Transverse colon (tissue), 4 donors: ENCODE measurements at regions of chr12 and their contacts with region 1.

Region 1: DNA sequence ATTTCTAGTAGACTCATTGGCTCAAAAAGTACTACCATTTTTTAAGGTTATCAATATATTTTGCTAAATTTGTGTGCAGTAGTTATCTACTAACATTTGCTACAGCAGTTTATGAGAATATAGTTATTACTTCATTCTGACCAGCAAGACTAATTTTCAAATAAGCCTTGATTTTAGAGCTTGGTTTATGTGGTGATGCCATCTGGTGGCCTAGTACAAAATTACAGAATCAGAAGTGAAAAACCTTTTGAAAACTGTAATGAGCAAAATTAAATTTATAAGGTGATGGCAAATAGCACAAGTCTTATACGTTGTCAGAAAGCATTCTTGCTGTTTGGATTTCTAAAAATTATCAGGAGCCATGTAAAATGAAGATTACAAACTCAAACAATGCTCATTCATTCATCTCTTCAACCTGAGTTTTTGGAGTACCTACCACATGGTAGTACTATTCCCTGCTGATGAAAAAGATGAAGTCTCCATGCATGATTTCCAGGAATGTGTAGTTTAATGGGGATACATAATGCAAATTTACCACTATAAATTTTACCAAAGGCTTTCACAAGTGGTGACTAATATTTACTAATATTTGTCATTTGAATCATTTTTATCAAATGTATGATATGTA is 51.0 kb downstream of the MAGOHB start:
- DNase-seq: no peak
- H3K4me3 ChIP-seq: no peak overlapping the region
- H3K27ac ChIP-seq: no peak overlapping the region
- H3K4me1 ChIP-seq: no peaks in the 10 kb centered on the region
- H3K27me3 ChIP-seq: no peaks in the 10 kb centered on the region
- CTCF ChIP-seq: peak; percentile 68 to 86 (median 73)
- EP300 ChIP-seq: no peak
- POLR2A ChIP-seq: no peak

Region 2: GRCh38 chr12:9349888-9350885 is 1212.2 kb before region 1 on chr12:
- in situ Hi-C with region 1: no loop called
- intact Hi-C with region 1: no loop called
- DNase-seq: no peak
- H3K4me3 ChIP-seq: no peak overlapping the region
- H3K27ac ChIP-seq: no peak overlapping the region
- H3K4me1 ChIP-seq: no peaks in the 10 kb centered on the region
- H3K27me3 ChIP-seq: no peaks in the 10 kb centered on the region
- CTCF ChIP-seq: no peak
- EP300 ChIP-seq: no peak
- POLR2A ChIP-seq: no peak

Region 3: GRCh38 chr12:10235761-10236631 is 326.4 kb before region 1 on chr12:
- in situ Hi-C with region 1: loop called (anchors 5 to 25 kb)
- intact Hi-C with region 1: loop called (anchors 5 kb)
- DNase-seq: no peak
- H3K4me3 ChIP-seq: no peak overlapping the region
- H3K27ac ChIP-seq: no peak overlapping the region
- H3K4me1 ChIP-seq: no peaks in the 10 kb centered on the region
- H3K27me3 ChIP-seq: no peaks in the 10 kb centered on the region
- CTCF ChIP-seq: peak; percentile 80 to 86 (median 85)
- EP300 ChIP-seq: no peak
- POLR2A ChIP-seq: no peak

Region 4: DNA sequence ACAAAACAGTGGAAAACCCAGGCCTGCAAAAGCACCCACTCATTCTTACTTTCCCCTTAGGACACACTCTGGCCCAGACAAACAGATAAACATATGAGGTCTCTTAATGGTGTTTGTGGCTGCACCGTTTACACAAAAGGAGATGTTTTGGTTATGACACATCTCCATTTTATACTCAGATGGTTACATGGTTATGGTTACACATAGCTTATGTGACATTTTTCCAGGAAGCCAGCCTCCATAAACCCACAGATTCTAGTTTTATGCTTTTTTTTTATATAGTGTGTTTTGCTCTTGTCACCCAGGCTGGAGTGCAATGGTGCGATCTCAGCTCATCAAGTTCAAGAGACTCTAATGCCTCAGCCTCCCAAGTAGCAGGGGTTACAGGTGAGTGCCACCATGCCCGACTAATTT is 258.3 kb before region 1 on chr12:
- in situ Hi-C with region 1: loop called in 1 of 4 experiments (anchors 25 kb)
- intact Hi-C with region 1: no loop called
- DNase-seq: no peak
- H3K4me3 ChIP-seq: no peak overlapping the region
- H3K27ac ChIP-seq: no peak overlapping the region
- H3K4me1 ChIP-seq: no peaks in the 10 kb centered on the region
- H3K27me3 ChIP-seq: no peaks in the 10 kb centered on the region
- CTCF ChIP-seq: no peak
- EP300 ChIP-seq: no peak
- POLR2A ChIP-seq: no peak

Region 5: GRCh38 chr12:10320643-10321042 is 241.8 kb before region 1 on chr12:
- in situ Hi-C with region 1: loop called in 3 of 4 experiments (anchors 10 to 25 kb)
- intact Hi-C with region 1: no loop called
- DNase-seq: no peak
- H3K4me3 ChIP-seq: no peak overlapping the region
- H3K27ac ChIP-seq: no peak overlapping the region
- H3K4me1 ChIP-seq: no peaks in the 10 kb centered on the region
- H3K27me3 ChIP-seq: no peaks in the 10 kb centered on the region
- CTCF ChIP-seq: no peak
- EP300 ChIP-seq: no peak
- POLR2A ChIP-seq: no peak

Region 6: DNA sequence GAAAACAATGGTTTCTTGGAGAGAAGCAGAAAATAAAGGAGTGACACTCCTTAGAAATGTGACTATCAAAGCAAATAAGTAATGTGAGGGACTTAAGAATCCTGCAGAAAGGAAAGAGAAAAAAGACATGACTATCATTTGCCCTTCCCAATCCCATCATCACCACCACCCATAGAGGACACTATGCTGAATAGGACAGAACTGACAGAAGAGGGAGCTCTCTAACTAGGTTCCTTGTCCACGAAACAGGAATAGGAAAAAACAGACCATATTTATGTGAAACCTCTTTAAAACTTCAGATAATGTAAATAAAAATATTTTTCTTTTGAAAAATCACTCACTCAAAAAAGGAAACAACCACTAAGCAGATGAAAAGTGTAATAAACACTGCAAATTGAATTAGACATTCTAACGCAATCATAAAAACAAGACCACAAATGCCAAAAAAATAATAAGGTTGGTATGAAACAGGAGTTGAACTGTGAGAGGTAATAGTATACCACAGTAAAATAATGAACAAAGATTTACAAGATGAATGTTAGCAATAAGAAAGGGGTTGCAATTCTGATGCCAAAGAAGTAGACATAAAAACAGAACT is 230.7 kb before region 1 on chr12:
- in situ Hi-C with region 1: loop called in 2 of 4 experiments (anchors 10 to 25 kb)
- intact Hi-C with region 1: loop called (anchors 2 kb)
- DNase-seq: no peak
- H3K4me3 ChIP-seq: no peak overlapping the region
- H3K27ac ChIP-seq: no peak overlapping the region
- H3K4me1 ChIP-seq: no peaks in the 10 kb centered on the region
- H3K27me3 ChIP-seq: no peaks in the 10 kb centered on the region
- CTCF ChIP-seq: peak; percentile 64 to 76 (median 68)
- EP300 ChIP-seq: no peak
- POLR2A ChIP-seq: no peak

Region 7: DNA sequence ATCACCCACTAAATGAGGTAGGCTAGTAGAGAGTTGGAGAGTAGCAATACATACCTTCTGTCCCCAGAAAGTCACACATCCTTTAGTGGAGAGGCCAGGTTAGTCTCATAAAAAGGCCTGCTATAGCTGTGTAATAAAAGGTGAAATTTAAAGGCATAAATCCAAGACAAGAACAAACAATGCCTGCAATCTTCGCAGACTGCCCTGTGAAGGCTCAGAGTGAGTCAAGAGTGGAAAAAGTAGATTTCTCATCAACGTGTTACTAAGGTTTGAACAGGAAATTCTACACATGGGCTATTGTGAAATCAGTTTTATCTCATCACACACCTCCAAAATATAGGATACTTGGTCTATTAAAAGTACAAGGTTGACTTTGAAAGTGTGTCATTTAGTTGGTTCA is 109.3 kb before region 1 on chr12 and contains the start of gene KLRC1:
- in situ Hi-C with region 1: no loop called
- intact Hi-C with region 1: no loop called
- DNase-seq: no peak
- H3K4me3 ChIP-seq: no peak within 1 kb of the TSS
- H3K27ac ChIP-seq: no peak within 1 kb of the TSS
- H3K4me1 ChIP-seq: peaks cover 0 to 4% (median 0%) of the 10 kb centered on the region in 4 donors
- H3K27me3 ChIP-seq: no peaks in the 10 kb centered on the region
- CTCF ChIP-seq: no peak
- EP300 ChIP-seq: no peak
- POLR2A ChIP-seq: no peak
- total RNA-seq, gene KLRC1: 1.4 to 2.6 TPM in 2 of 4 donors, not detected in the others